ENCODE measurements at regions of chr1 and their contacts with region 1.

Region 1: DNA sequence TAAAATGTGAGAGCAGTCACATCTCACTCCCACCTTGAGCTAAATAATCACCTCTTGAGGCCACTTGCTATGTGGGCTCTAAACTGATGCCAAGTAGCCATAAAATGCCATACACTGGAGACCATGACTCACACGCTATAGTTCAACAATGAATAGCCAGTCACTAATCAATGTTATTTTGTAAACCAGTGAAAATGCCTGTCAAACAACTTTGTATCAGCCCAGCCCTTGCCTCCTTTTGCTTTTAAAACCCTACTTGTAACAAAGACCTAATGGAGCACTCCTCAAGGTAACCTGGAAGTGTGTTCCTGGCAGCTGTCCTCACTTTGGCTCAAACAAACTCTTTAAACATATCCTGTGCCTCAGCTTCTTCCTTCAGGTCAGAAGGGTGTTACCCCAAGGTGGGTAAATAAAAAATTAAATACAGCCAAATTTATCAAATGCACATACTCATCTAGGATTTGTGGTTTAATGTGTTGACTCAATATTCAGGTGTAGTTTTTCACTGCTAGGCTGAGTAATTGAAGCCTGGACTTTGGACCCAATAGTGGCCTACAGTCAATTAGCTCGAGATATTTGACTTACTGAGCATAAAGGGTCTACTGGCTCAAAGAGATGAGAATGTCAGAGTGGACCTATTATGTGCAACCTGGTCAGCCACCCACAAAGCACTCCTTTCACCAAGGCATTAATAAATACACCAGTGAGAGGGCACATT is 154.3 kb downstream of the COQ8A start:
- DNase-seq: no peak

Region 2: DNA sequence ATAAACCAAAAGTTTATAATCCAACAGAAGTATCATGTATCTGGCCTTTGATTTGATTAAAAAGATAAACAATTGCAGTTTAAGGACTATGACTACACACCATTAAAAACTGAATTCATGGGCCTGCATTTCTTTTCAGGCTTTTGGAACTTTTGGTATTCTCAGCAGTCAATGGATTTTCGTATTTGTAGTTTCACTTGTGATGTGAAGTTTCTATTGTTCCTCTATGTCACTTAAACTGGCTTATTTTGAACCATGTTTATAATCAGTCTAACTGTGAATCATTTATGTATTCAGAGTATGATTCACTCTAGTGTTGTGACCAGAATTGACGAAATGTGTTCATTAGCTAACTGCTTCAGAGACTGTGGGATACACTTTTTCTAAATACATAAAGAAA is 21.4 kb before region 1 on chr1:
- CTCF ChIA-PET with region 1: no interaction called
- POLR2A ChIA-PET with region 1: no interaction called
- DNase-seq: no peak

Region 3: GRCh38 chr1:227134686-227135314 is 40.4 kb after region 1 on chr1:
- CTCF ChIA-PET with region 1: no interaction called
- POLR2A ChIA-PET with region 1: no interaction called
- DNase-seq: no peak

Region 4: GRCh38 chr1:227472772-227473171 is 378.4 kb after region 1 on chr1:
- CTCF ChIA-PET with region 1: interaction called, 10 read pairs
- POLR2A ChIA-PET with region 1: no interaction called
- DNase-seq: no peak